Vagina (tissue), 2 donors: ENCODE measurements at regions of chr13 and their contacts with region 1.

Region 1: GRCh38 chr13:20924758-20925394 is 22.3 kb upstream of the XPO4 start:
- DNase-seq: no peak
- H3K4me3 ChIP-seq: no peak overlapping the region
- H3K27ac ChIP-seq: no peak overlapping the region
- H3K4me1 ChIP-seq: no peaks in the 10 kb centered on the region
- H3K27me3 ChIP-seq: no peaks in the 10 kb centered on the region
- CTCF ChIP-seq: peak in 2 of 3 experiments; percentile 52 to 64
- POLR2A ChIP-seq: no peak

Region 2: GRCh38 chr13:20489185-20489820 is 435.6 kb before region 1 on chr13:
- intact Hi-C with region 1: loop called (anchors 2 kb)
- DNase-seq: no peak
- H3K4me3 ChIP-seq: no peak overlapping the region
- H3K27ac ChIP-seq: no peak overlapping the region
- H3K4me1 ChIP-seq: no peaks in the 10 kb centered on the region
- H3K27me3 ChIP-seq: no peaks in the 10 kb centered on the region
- CTCF ChIP-seq: no peak
- POLR2A ChIP-seq: no peak

Region 3: GRCh38 chr13:20713751-20714150 is 211.1 kb before region 1 on chr13:
- intact Hi-C with region 1: loop called (anchors 10 kb)
- DNase-seq: no peak
- H3K4me3 ChIP-seq: no peak overlapping the region
- H3K27ac ChIP-seq: peak overlapping the region; percentile 72
- H3K4me1 ChIP-seq: peaks cover 16% of the 10 kb centered on the region
- H3K27me3 ChIP-seq: no peaks in the 10 kb centered on the region
- CTCF ChIP-seq: no peak
- POLR2A ChIP-seq: no peak